Calu3 (cell line): ENCODE measurements at regions of chr21 and their contacts with region 1.

Region 1: GRCh38 chr21:42905195-42905594 is 12.1 kb downstream of the NDUFV3 start:
- DNase-seq: no peak
- H3K4me3 Mint-ChIP-seq: no peak overlapping the region
- H3K27ac Mint-ChIP-seq: no peak overlapping the region
- H3K4me1 Mint-ChIP-seq: no peaks in the 10 kb centered on the region
- H3K27me3 Mint-ChIP-seq: no peaks in the 10 kb centered on the region
- CTCF ChIP-seq: no peak

Region 2: GRCh38 chr21:42956819-42957632 is 51.8 kb after region 1 on chr21:
- CTCF ChIA-PET with region 1: no interaction called
- intact Hi-C with region 1: loop called (anchors 5 kb)
- DNase-seq: no peak
- H3K4me3 Mint-ChIP-seq: no peak overlapping the region
- H3K27ac Mint-ChIP-seq: no peak overlapping the region
- H3K4me1 Mint-ChIP-seq: peaks cover 8% of the 10 kb centered on the region
- H3K27me3 Mint-ChIP-seq: no peaks in the 10 kb centered on the region
- CTCF ChIP-seq: no peak